ENCODE measurements at regions of chr4 and their contacts with region 1.

Region 1: DNA sequence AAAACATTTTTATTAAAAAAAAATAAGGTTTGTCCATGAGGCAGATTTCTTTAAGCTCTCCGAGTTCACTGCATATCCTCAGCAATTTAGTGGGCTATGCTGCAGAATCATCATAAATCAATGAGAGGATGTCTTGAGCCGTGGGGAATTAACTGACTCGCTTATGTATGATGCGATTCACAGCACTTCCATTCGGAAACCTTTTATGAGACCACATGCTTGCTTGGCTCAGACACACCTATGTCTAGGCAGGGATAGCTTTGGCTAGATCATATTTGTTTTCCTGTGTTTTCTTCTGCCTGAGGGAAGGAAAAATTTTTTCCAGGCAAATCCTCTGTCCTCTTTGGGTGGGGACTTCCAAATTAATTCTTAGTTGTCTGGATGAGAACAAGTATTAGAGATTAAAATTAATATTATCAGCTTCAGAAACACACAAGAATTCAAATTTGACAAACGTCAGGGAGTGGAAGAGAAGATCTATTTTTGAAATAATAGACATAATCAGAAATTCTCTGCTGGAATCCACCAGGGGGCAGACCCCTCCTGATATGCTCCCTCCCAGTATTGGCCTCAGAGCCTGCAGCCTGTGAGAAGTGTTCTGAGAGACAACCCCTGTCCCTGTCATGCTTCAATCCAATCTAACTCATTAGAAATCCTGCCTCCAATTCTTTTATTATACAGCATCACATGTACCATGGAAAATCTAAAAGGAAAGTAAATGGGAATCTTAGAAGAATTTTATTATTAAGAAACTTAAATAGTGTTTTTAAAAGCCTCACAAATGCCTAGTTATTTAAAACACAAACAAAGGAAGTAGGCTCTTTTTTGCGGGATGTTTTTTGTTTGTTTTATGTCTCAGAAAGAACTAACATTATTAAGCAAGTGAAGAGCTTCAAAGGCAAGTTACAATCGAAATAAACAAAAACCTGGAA is 345.1 kb upstream of the TACR3 start:
- DNase-seq: peak; percentile 54
- ATAC-seq: peak; percentile 80
- H3K4me3 ChIP-seq: no peak overlapping the region
- H3K27ac ChIP-seq: no peak overlapping the region
- H3K4me1 ChIP-seq: no peaks in the 10 kb centered on the region
- H3K27me3 ChIP-seq: no peaks in the 10 kb centered on the region
- CTCF ChIP-seq: peak; percentile 68

Region 2: GRCh38 chr4:104693599-104694201 is 628.8 kb after region 1 on chr4:
- CTCF ChIA-PET with region 1: no interaction called
- POLR2A ChIA-PET with region 1: no interaction called
- intact Hi-C with region 1: loop called (anchors 1 kb)
- DNase-seq: peak; percentile 64
- ATAC-seq: no peak; the same call in 1 of the 2 replicates
- H3K4me3 ChIP-seq: no peak overlapping the region
- H3K27ac ChIP-seq: no peak overlapping the region
- H3K4me1 ChIP-seq: no peaks in the 10 kb centered on the region
- H3K27me3 ChIP-seq: no peaks in the 10 kb centered on the region
- CTCF ChIP-seq: peak; percentile 69

Measured in PC-3 (cell line).